ENCODE measurements at regions of chr11 and their contacts with region 1.

Region 1: GRCh38 chr11:69048718-69049489 is at the start of gene TPCN2:
- DNase-seq: peak; percentile 87 to 96
- H3K4me3 ChIP-seq: peak within 1 kb of the TSS; percentile 95 to 100
- H3K27ac ChIP-seq: peak within 1 kb of the TSS; percentile 94 to 99
- H3K4me1 ChIP-seq: peaks cover 0 to 60% (median 42%) of the 10 kb centered on the region in 4 donors
- H3K27me3 ChIP-seq: no peaks in the 10 kb centered on the region
- CTCF ChIP-seq: no peak

Region 2: GRCh38 chr11:69010964-69011623 is 37.8 kb before region 1 on chr11:
- intact Hi-C with region 1: loop called (anchors 5 kb)
- DNase-seq: peak; percentile 78 to 93
- H3K4me3 ChIP-seq: peak overlapping the region; percentile 70 to 81
- H3K27ac ChIP-seq: peak overlapping the region; percentile 91 to 93
- H3K4me1 ChIP-seq: peaks cover 13 to 74% (median 60%) of the 10 kb centered on the region in 4 donors
- H3K27me3 ChIP-seq: no peaks in the 10 kb centered on the region
- CTCF ChIP-seq: no peak

Measured in tibial artery (tissue), 4 donors.